ENCODE measurements at regions of chr5 and their contacts with region 1.

Region 1: DNA sequence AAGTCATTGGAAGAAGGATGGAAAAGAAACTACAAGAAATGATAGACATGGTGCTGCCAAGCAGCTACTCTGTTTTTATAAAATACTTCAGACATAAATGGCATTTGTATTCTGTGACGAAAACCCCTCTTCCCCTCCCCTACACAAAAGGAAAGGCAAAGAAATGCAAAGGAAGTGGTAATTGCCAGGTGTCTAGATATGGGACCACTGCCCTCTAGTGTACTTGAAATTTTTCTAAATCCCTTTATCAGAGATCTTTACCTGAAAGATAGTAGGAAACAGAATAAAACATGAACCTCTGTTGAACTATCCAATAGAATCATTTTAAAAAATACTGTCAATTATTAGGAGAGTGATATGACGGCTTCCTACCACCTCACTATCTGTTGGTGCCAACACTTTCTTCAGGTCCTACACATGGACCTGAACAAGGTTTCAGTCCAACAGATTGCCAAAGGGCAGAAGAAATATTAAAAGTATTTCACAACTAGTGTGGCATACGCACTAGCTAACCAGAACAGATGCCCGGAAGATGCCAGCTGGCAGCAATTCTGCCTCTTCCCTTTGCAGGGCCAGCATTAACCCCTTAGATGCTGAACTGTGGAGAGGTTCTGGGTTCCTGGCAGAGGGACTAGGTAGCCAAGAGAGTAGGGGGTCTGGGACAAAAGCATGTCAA is 104.1 kb downstream of the TSSK1B start:
- DNase-seq: peak; percentile 18
- H3K4me3 Mint-ChIP-seq: no peak overlapping the region
- H3K27ac Mint-ChIP-seq: no peak overlapping the region
- H3K4me1 Mint-ChIP-seq: peaks cover 10% of the 10 kb centered on the region
- H3K27me3 Mint-ChIP-seq: no peaks in the 10 kb centered on the region
- CTCF ChIP-seq: no peak

Region 2: GRCh38 chr5:112995764-112996618 is 334.7 kb before region 1 on chr5:
- CTCF ChIA-PET with region 1: interaction called, 6 read pairs
- intact Hi-C with region 1: loop called (anchors 1 kb)
- DNase-seq: peak; percentile 79
- H3K4me3 Mint-ChIP-seq: no peak overlapping the region
- H3K27ac Mint-ChIP-seq: no peak overlapping the region
- H3K4me1 Mint-ChIP-seq: no peaks in the 10 kb centered on the region
- H3K27me3 Mint-ChIP-seq: no peaks in the 10 kb centered on the region
- CTCF ChIP-seq: peak; percentile 79

Region 3: DNA sequence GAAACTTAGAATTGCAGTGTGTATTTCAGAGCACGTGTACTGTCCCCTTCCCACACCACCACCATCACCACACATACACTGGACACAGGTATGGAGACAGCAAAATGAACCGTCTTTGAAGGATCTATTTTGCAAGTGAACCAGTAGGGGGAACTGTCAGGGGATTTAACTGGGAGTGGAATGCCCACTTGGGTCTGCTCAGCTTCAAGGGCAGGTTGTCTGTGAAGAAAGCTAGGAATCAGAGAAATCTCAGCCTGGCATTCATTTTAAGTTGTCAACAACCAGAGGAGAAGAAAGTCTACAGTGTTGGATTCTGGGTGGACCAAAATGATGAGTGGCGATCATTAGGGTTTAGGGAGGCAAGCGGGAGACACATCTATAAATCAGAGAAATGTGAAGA is 207.1 kb before region 1 on chr5:
- CTCF ChIA-PET with region 1: no interaction called
- intact Hi-C with region 1: loop called (anchors 2 kb)
- DNase-seq: peak; percentile 13
- H3K4me3 Mint-ChIP-seq: no peak overlapping the region
- H3K27ac Mint-ChIP-seq: no peak overlapping the region
- H3K4me1 Mint-ChIP-seq: no peaks in the 10 kb centered on the region
- H3K27me3 Mint-ChIP-seq: peaks cover 14% of the 10 kb centered on the region
- CTCF ChIP-seq: peak; percentile 22

Region 4: GRCh38 chr5:113202746-113203716 is 127.6 kb before region 1 on chr5:
- CTCF ChIA-PET with region 1: interaction called, 3 read pairs
- intact Hi-C with region 1: loop called (anchors 1 kb)
- DNase-seq: peak; percentile 91
- H3K4me3 Mint-ChIP-seq: peak overlapping the region; percentile 75
- H3K27ac Mint-ChIP-seq: peak overlapping the region; percentile 83
- H3K4me1 Mint-ChIP-seq: peaks cover 56% of the 10 kb centered on the region
- H3K27me3 Mint-ChIP-seq: no peaks in the 10 kb centered on the region
- CTCF ChIP-seq: no peak

Region 5: DNA sequence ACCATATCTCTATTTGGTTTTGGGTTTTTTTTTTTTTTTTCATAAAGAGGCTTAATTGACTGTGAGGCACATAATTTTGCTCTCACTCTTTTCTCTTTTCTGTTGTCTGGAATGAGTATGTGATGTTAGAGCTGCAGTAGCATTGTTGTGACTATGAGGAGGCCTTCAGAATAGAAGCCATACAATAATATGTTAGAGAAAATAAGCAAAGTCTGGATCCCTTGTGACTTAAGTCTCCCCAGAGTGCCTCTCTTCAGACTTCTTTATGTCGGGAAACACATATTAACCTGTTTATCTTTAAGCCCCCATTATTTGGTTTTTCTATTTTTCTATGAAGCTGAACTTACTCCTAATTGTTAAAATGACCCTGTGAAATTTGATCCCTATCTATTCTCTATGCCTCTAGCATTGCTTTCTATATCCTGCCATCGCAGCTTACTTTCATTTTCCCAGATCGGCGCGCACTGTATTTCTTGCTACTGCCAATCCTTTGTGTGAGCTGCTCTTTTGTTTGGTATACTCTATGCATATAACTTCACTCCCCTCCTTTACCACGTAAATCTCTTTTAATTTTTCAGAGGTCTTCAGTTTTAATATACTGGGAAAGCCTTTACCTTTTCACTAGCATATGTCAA is 658.7 kb after region 1 on chr5:
- CTCF ChIA-PET with region 1: no interaction called
- intact Hi-C with region 1: no loop called
- DNase-seq: no peak
- H3K4me3 Mint-ChIP-seq: no peak overlapping the region
- H3K27ac Mint-ChIP-seq: no peak overlapping the region
- H3K4me1 Mint-ChIP-seq: no peaks in the 10 kb centered on the region
- H3K27me3 Mint-ChIP-seq: no peaks in the 10 kb centered on the region
- CTCF ChIP-seq: no peak